PC-3 (cell line): ENCODE measurements at regions of chr3 and their contacts with region 1.

Region 1: GRCh38 chr3:160707187-160707794 is 30.3 kb downstream of the ARL14 start:
- DNase-seq: peak; percentile 73
- ATAC-seq: peak; percentile 93
- H3K4me3 ChIP-seq: no peak overlapping the region
- H3K27ac ChIP-seq: no peak overlapping the region
- H3K4me1 ChIP-seq: no peaks in the 10 kb centered on the region
- H3K27me3 ChIP-seq: no peaks in the 10 kb centered on the region
- CTCF ChIP-seq: peak; percentile 70

Region 2: DNA sequence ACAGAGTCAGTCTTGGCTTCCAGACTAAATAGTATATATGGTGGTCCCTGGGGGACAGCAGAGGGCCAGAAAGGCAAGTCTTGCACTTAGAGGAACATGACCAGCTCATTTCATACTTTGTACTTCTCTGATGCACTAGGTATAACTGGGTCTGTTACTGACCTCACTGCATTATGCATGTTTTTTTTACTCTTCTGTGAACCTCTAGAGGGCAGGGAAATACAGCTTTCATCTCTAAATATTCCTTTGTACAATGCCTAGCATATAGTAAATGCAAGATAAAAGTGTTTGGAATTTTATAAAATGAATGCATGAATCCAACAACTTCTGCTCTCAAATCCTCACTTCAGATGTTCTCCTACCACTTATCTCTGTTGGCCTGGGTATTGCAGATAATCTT is 53.8 kb before region 1 on chr3:
- CTCF ChIA-PET with region 1: no interaction called
- POLR2A ChIA-PET with region 1: no interaction called
- intact Hi-C with region 1: loop called (anchors 5 kb)
- DNase-seq: peak; percentile 27
- ATAC-seq: peak; percentile 87
- H3K4me3 ChIP-seq: no peak overlapping the region
- H3K27ac ChIP-seq: no peak overlapping the region
- H3K4me1 ChIP-seq: peaks cover 11% of the 10 kb centered on the region
- H3K27me3 ChIP-seq: no peaks in the 10 kb centered on the region
- CTCF ChIP-seq: peak; percentile 61

Region 3: DNA sequence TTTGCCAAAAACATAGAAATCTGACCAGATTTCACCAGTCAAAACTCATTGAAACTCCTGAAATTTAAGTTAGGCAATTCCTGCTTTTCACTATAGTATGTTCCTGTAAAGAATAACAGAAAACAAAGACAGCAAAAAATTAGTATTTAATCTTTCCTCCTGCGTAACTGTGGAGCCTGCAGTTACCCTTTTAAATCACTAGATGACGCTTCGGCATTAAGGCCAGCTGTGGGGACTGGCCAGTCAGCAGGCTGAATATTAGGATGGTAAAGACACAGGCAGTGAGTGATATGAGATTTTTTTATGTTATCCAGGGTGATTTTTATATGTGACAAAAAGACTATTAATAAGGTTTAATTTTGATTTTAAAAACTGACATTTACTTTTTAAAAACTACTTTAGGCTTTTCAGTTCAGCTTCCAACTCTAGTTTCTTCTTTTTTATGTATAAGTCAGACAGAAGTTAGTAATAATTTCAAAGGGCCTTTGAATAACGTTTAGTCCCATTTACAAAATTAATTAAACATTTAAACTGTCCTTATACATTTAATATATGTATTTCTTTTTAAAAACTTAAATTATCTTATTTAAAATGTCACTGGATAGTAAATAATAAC is 213.8 kb after region 1 on chr3:
- CTCF ChIA-PET with region 1: interaction called, 4 read pairs
- POLR2A ChIA-PET with region 1: no interaction called
- intact Hi-C with region 1: loop called (anchors 2 kb)
- DNase-seq: peak; percentile 75
- ATAC-seq: peak; percentile 94
- H3K4me3 ChIP-seq: no peak overlapping the region
- H3K27ac ChIP-seq: no peak overlapping the region
- H3K4me1 ChIP-seq: no peaks in the 10 kb centered on the region
- H3K27me3 ChIP-seq: no peaks in the 10 kb centered on the region
- CTCF ChIP-seq: peak; percentile 95

Region 4: GRCh38 chr3:161096771-161097355 is 389.6 kb after region 1 on chr3:
- CTCF ChIA-PET with region 1: no interaction called
- POLR2A ChIA-PET with region 1: no interaction called
- intact Hi-C with region 1: loop called (anchors 10 kb)
- DNase-seq: peak; percentile 72
- ATAC-seq: peak; percentile 77
- H3K4me3 ChIP-seq: no peak overlapping the region
- H3K27ac ChIP-seq: no peak overlapping the region
- H3K4me1 ChIP-seq: 0 out of 2 replicates have a peak, but pooled peaks cover 11% of the 10 kb centered on the region
- H3K27me3 ChIP-seq: no peaks in the 10 kb centered on the region
- CTCF ChIP-seq: peak; percentile 93